ENCODE measurements at regions of chr22 and their contacts with region 1.

Region 1: GRCh38 chr22:43884600-43885325 is 7.0 kb downstream of the PNPLA5 start:
- DNase-seq: peak; percentile 75
- H3K4me3 ChIP-seq: no peak overlapping the region; a peak in 1 of 4 replicates
- H3K27ac ChIP-seq: no peak overlapping the region
- H3K4me1 ChIP-seq: no peaks in the 10 kb centered on the region
- H3K27me3 ChIP-seq: no peaks in the 10 kb centered on the region; the same call in 1 of the 2 replicates
- CTCF ChIP-seq: peak; percentile 62
- EP300 ChIP-seq: no peak
- RAD21 ChIP-seq: peak; percentile 63

Region 2: GRCh38 chr22:43897751-43898261 is 13.0 kb after region 1 on chr22:
- CTCF ChIA-PET with region 1: interaction called, 11 read pairs
- POLR2A ChIA-PET with region 1: no interaction called
- DNase-seq: no peak
- H3K4me3 ChIP-seq: no peak overlapping the region
- H3K27ac ChIP-seq: peak overlapping the region in 1 of 2 experiments; percentile 74; a peak in 2 of 4 replicates
- H3K4me1 ChIP-seq: peaks cover 0 to 20% of the 10 kb centered on the region in 2 experiments; a peak in 2 of 4 replicates
- H3K27me3 ChIP-seq: no peaks in the 10 kb centered on the region
- CTCF ChIP-seq: no peak
- EP300 ChIP-seq: peak in 1 of 2 experiments; percentile 50; a peak in 1 of 4 replicates
- RAD21 ChIP-seq: no peak

Measured in SK-N-SH (cell line).